ENCODE measurements at regions of chr6 and their contacts with region 1.

Region 1: GRCh38 chr6:32255199-32256153 is 31.6 kb upstream of the NOTCH4 start:
- DNase-seq: peak; percentile 75
- ATAC-seq: peak; percentile 94
- H3K4me3 Mint-ChIP-seq: peak overlapping the region; percentile 66
- H3K27ac Mint-ChIP-seq: peak overlapping the region; percentile 97
- H3K4me1 Mint-ChIP-seq: peaks cover 18% of the 10 kb centered on the region
- H3K27me3 Mint-ChIP-seq: peaks cover 5% of the 10 kb centered on the region; the same call in 1 of the 2 replicates
- CTCF ChIP-seq: peak; percentile 56

Region 2: DNA sequence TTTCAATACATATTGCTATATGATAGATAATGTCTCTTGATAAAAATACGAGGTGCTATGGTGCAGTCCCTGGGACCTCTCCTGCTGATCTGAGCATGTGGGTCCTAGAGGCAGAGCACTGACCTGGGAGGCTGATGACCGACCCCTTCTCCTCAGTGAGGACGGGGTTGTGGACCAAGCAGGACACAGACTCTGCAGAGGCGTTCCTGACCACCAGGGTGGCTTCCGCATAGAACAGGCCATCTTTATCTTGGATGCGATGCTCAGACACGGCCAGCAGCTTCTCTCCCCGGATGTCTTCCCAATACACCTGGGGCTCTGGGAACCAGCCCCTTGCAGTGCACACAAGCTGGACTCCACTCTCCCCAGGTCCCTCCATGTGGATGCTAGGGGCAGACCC is 147.3 kb after region 1 on chr6:
- CTCF ChIA-PET with region 1: interaction called, 12 read pairs
- POLR2A ChIA-PET with region 1: no interaction called
- DNase-seq: no peak
- ATAC-seq: peak; percentile 70
- H3K4me3 Mint-ChIP-seq: no peak overlapping the region
- H3K27ac Mint-ChIP-seq: no peak overlapping the region
- H3K4me1 Mint-ChIP-seq: peaks cover 10% of the 10 kb centered on the region; the same call in 1 of the 2 replicates
- H3K27me3 Mint-ChIP-seq: peaks cover 7% of the 10 kb centered on the region; the same call in 1 of the 2 replicates
- CTCF ChIP-seq: no peak